Right cardiac atrium (tissue), 5 donors: ENCODE measurements at regions of chr14 and their contacts with region 1.

Region 1: DNA sequence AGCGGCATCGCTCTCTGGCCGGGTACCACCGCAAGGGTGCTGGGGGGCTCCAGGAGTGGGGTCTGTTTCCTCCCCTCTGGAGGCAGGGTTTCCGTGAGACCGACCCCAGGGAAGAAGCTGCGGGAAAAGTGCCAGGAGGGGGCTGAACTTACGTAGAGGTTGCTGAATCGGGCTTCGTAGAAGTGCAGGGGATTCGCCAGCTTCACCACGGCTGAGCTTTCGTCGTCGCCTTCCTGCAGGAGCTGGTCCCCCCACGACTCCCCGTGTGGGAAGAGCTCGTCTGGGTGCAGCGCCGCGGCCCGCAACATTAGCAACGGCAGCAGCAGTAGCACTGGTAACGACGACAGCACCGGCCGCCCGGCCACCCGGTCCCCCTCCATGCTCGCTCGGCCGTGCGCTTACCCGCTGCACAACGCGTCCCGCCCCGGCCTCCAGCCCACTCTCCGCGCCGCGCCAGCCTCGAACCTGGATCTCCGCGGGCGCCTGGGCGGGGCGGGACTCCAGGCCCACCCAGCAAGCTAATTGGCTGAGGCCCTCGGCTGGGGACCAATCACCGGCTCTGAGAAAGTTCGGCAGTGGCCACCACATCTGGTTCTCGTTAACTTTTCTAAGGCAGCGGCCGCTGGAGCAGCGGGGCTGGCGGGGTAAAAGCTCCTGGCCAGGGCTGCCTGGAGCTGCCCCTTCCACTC is at the start of gene NID2:
- DNase-seq: peak; percentile 89 to 96 (median 95)
- ATAC-seq: peak; percentile 95 to 97
- H3K4me3 ChIP-seq: peak within 1 kb of the TSS; percentile 71
- H3K27ac ChIP-seq: peak within 1 kb of the TSS; percentile 71
- H3K4me1 ChIP-seq: no peaks in the 10 kb centered on the region
- H3K27me3 ChIP-seq: no peaks in the 10 kb centered on the region
- total RNA-seq, gene NID2: 22.5 to 38.1 (median 29.2) TPM

Region 2: GRCh38 chr14:51873221-51873893 is 195.4 kb before region 1 on chr14:
- intact Hi-C with region 1: no loop called
- DNase-seq: no peak
- ATAC-seq: peak; percentile 55 to 58
- H3K4me3 ChIP-seq: no peak overlapping the region
- H3K27ac ChIP-seq: no peak overlapping the region
- H3K4me1 ChIP-seq: no peaks in the 10 kb centered on the region
- H3K27me3 ChIP-seq: no peaks in the 10 kb centered on the region

Region 3: GRCh38 chr14:51996148-51996746 is 72.5 kb before region 1 on chr14:
- intact Hi-C with region 1: loop called in 1 of 4 experiments (anchors 5 kb)
- DNase-seq: no peak
- ATAC-seq: no peak
- H3K4me3 ChIP-seq: no peak overlapping the region
- H3K27ac ChIP-seq: no peak overlapping the region
- H3K4me1 ChIP-seq: no peaks in the 10 kb centered on the region
- H3K27me3 ChIP-seq: no peaks in the 10 kb centered on the region

Region 4: DNA sequence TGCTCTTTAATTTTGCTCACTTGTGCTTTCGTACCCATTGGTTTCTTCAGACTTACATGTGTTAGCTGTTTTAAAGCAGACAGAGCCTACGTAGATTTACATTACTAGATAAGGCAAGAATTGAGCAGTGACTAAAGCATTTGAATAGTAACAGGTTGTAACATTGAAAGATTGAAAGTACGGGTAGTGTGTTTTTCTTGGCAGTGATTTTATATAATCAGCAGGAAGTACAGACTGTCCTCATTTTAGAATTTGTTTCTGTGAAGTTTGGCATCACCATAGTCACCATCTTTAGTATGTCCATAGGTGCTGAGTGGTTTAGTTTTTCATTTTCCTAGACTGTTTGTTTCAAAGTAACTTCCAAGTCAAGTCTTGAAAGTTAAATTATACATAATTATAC is 65.4 kb before region 1 on chr14:
- intact Hi-C with region 1: loop called in 2 of 4 experiments (anchors 5 kb)
- DNase-seq: no peak
- ATAC-seq: peak; percentile 85 to 86
- H3K4me3 ChIP-seq: no peak overlapping the region
- H3K27ac ChIP-seq: no peak overlapping the region
- H3K4me1 ChIP-seq: peaks cover 8% of the 10 kb centered on the region
- H3K27me3 ChIP-seq: no peaks in the 10 kb centered on the region

Region 5: DNA sequence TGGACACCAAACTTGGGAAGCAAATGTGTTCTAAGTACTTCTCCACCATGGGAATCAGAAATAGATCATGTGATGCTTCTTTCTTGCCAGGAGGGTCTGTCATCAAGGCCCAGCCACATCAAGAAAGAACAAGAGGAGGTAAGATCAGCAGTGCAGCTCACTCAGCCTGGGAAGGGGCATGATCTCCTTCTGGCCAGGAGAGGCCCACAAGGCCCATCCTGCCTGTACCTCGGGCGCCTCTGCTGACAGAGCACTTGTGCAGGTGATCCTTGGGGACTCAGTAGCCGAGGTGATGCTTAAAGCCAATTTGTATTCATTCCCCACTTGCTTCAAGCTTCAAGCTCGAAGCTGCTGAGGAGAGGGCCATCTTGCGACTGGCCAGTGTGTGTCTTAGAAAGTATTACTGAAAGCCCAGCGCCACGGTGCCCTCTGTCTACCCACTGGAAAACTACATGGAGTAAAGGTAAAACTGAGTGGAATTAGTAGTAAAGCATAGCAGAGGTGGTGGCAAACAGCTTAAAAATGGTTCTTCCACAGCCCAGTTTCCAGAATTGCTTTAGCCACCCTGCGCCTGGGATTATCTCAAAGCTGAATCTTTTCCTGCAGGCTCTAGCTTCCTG is 53.2 kb before region 1 on chr14:
- intact Hi-C with region 1: loop called in 2 of 4 experiments (anchors 5 to 10 kb)
- DNase-seq: peak in 1 of 3 donors; percentile 65
- ATAC-seq: peak in 1 of 2 donors; percentile 17
- H3K4me3 ChIP-seq: no peak overlapping the region
- H3K27ac ChIP-seq: peak overlapping the region; percentile 65
- H3K4me1 ChIP-seq: peaks cover 25% of the 10 kb centered on the region
- H3K27me3 ChIP-seq: no peaks in the 10 kb centered on the region

Region 6: GRCh38 chr14:52031781-52032180 is 37.0 kb before region 1 on chr14:
- intact Hi-C with region 1: loop called in 1 of 4 experiments (anchors 5 kb)
- DNase-seq: peak; percentile 72 to 86 (median 83)
- ATAC-seq: peak; percentile 93 to 95
- H3K4me3 ChIP-seq: no peak overlapping the region
- H3K27ac ChIP-seq: peak overlapping the region; percentile 93
- H3K4me1 ChIP-seq: peaks cover 8% of the 10 kb centered on the region
- H3K27me3 ChIP-seq: no peaks in the 10 kb centered on the region

Region 7: GRCh38 chr14:52124791-52125661 is 56.3 kb after region 1 on chr14:
- intact Hi-C with region 1: loop called in 1 of 4 experiments (anchors 10 kb)
- DNase-seq: no peak
- ATAC-seq: peak; percentile 45 to 80
- H3K4me3 ChIP-seq: no peak overlapping the region
- H3K27ac ChIP-seq: peak overlapping the region; percentile 32
- H3K4me1 ChIP-seq: peaks cover 4% of the 10 kb centered on the region
- H3K27me3 ChIP-seq: no peaks in the 10 kb centered on the region

Region 8: GRCh38 chr14:52351233-52352060 is 282.7 kb after region 1 on chr14:
- intact Hi-C with region 1: no loop called
- DNase-seq: no peak
- ATAC-seq: peak; percentile 68 to 75
- H3K4me3 ChIP-seq: no peak overlapping the region
- H3K27ac ChIP-seq: no peak overlapping the region
- H3K4me1 ChIP-seq: peaks cover 7% of the 10 kb centered on the region
- H3K27me3 ChIP-seq: no peaks in the 10 kb centered on the region